Activated T-helper 1 cell treated with anti-CD3 and anti-CD28 coated beads, Interleukin-12 subunit alpha, Interleukin-12 subunit beta, Interleukin-2, Interleukin-4 antibody, amounts not matched to agents 30 ng/mL and 10 ng/mL and 1 ng/mL, durations not matched to agents 14 hours and 24 hours and 36 hours (primary cell): ENCODE measurements at regions of chr6 and their contacts with region 1.

Region 1: GRCh38 chr6:110944681-110945151 is 13.8 kb upstream of the GTF3C6 start:
- DNase-seq: peak; percentile 40
- H3K4me3 Mint-ChIP-seq: no peak overlapping the region
- H3K27ac Mint-ChIP-seq: peak overlapping the region; percentile 80
- H3K4me1 Mint-ChIP-seq: peaks cover 11% of the 10 kb centered on the region
- H3K27me3 Mint-ChIP-seq: no peaks in the 10 kb centered on the region

Region 2: DNA sequence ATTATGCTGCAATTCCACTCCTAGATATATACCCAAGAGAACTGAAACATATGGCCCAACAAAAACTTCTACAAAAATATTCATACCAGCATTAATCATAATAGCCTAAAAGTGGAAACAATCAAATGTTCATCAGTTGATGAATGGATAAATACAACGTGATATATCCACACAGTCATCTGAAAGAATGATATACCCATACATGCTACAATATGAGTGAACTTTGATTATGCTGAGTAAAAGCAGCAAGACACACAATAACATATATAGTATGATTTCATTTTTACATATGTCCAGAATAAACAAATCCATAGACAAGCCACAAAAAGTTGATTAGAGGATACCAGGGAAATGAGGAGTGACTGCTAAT is 160.1 kb before region 1 on chr6:
- intact Hi-C with region 1: loop called (anchors 1 kb)
- DNase-seq: no peak
- H3K4me3 Mint-ChIP-seq: no peak overlapping the region
- H3K27ac Mint-ChIP-seq: no peak overlapping the region
- H3K4me1 Mint-ChIP-seq: peaks cover 32% of the 10 kb centered on the region
- H3K27me3 Mint-ChIP-seq: no peaks in the 10 kb centered on the region

Region 3: DNA sequence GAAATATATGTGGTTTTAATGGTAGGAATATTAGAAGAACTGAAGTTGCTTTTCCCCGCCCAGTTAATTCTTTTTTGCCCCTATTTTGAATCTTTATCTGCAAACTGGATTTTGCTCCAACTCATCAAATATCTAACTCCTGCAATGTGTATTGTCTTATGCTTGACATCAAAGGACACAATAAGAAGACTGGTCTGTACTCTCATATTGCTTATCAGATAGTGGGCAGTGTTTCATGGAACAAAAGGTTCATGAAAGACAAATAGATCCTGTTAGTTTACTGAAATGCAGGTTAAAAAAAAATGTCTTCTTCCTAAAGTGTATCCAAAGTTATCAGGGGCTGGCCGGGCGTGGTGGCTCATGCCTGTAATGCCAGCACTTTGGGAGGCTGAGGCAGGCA is 13.9 kb before region 1 on chr6:
- intact Hi-C with region 1: loop called (anchors 1 kb)
- DNase-seq: no peak
- H3K4me3 Mint-ChIP-seq: no peak overlapping the region
- H3K27ac Mint-ChIP-seq: no peak overlapping the region
- H3K4me1 Mint-ChIP-seq: no peaks in the 10 kb centered on the region
- H3K27me3 Mint-ChIP-seq: peaks cover 10% of the 10 kb centered on the region

Region 4: GRCh38 chr6:110958329-110959192 is 13.8 kb after region 1 on chr6 and contains the start of gene GTF3C6:
- intact Hi-C with region 1: loop called (anchors 1 kb)
- DNase-seq: peak; percentile 93
- H3K4me3 Mint-ChIP-seq: peak within 1 kb of the TSS; percentile 100
- H3K27ac Mint-ChIP-seq: peak within 1 kb of the TSS; percentile 99
- H3K4me1 Mint-ChIP-seq: peaks cover 16% of the 10 kb centered on the region
- H3K27me3 Mint-ChIP-seq: peaks cover 2% of the 10 kb centered on the region
- total RNA-seq, gene GTF3C6: 137 TPM in 2 replicates

Region 5: GRCh38 chr6:110981202-110981600 is 36.5 kb after region 1 on chr6:
- intact Hi-C with region 1: loop called (anchors 1 kb)
- DNase-seq: no peak
- H3K4me3 Mint-ChIP-seq: peak overlapping the region; percentile 99
- H3K27ac Mint-ChIP-seq: peak overlapping the region; percentile 98
- H3K4me1 Mint-ChIP-seq: peaks cover 14% of the 10 kb centered on the region
- H3K27me3 Mint-ChIP-seq: no peaks in the 10 kb centered on the region

Region 6: DNA sequence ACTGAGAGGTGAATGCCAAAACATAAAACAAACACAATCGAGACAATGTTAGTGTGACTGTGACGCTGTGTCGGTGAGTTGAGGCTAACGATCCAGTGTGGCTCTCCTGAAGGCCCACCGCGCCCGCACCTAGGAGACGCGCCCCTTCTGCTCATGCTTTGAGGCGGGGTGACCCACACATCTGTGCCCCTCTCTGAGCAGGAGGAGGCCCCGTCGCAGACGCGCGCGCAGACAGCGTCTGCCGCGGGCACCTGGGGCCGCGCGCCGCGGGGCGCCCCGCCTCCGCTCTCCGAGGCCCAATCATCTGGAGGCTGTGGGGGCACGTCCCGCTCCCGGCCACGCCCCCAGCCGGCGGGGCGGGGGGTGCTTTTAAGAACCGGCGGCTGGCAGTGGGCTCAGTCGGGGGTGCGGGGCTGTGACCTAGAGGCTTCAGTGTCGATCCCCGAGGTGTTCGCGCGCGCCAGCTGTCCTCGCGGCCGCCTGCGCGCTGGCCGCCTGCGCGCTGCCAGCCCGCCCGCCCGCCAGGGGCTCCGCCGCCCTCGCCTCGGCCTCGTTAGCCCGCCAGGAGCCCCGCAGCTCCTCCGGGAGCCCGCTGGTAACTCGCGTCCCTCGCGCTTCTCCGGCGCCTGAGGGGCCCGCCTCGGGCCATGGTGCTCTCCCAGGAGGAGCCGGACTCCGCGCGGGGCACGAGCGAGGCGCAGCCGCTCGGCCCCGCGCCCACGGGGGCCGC is 142.6 kb after region 1 on chr6 and contains the start of gene SLC16A10:
- intact Hi-C with region 1: loop called (anchors 1 kb)
- DNase-seq: peak; percentile 66
- H3K4me3 Mint-ChIP-seq: peak within 1 kb of the TSS; percentile 88
- H3K27ac Mint-ChIP-seq: peak within 1 kb of the TSS; percentile 18
- H3K4me1 Mint-ChIP-seq: peaks cover 25% of the 10 kb centered on the region
- H3K27me3 Mint-ChIP-seq: peaks cover 14% of the 10 kb centered on the region
- total RNA-seq, gene SLC16A10: 2.8 and 3.2 TPM in 2 replicates

Region 7: DNA sequence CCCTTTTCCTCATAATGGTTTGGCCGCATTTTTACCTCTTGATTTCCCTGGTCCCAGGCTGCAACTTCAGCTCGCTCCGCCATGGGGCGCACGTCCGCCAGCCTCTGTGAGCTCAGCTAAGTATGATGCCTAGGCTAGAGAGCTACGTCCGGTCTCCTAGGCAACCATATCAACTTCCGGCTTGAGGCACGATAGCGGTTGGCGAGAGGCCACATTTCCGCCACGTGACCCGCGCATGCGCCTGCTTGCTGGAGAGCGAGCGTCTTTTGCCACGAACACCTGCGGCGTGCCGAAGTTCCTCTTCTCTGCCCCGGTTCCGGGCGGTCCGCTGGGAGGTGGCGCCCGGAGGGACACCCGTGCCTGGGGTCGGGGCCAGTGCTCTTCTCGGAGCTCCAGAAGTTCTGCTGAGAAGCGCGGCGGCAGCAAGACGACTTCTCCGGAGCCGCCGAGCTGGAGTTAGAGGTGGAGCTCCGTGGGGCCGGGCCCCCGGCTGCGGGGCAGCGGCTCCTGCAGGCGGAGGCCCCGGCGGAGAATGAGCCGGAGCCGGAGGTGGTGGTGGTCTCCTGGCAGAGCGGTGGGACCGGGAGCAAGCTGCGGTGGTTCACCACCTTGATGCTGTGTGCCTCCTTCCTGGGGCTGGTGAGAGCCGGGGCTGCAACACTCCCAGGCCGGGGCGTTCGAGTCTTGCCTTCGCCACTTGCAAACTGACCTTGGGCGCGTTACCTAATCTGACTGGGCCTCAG is 314.5 kb after region 1 on chr6:
- intact Hi-C with region 1: no loop called
- DNase-seq: peak; percentile 99
- H3K4me3 Mint-ChIP-seq: peak overlapping the region; percentile 81
- H3K27ac Mint-ChIP-seq: peak overlapping the region; percentile 87
- H3K4me1 Mint-ChIP-seq: peaks cover 34% of the 10 kb centered on the region
- H3K27me3 Mint-ChIP-seq: peaks cover 5% of the 10 kb centered on the region